B cell (primary cell): ENCODE measurements at regions of chr20 and their contacts with region 1.

Region 1: GRCh38 chr20:58870239-58871014 is 17.9 kb downstream of the GNAS start:
- DNase-seq: peak; percentile 69
- ATAC-seq: peak; percentile 78
- H3K4me3 ChIP-seq: no peak overlapping the region
- H3K4me3 Mint-ChIP-seq: no peak overlapping the region
- H3K27ac ChIP-seq: no peak overlapping the region
- H3K27ac Mint-ChIP-seq: no peak overlapping the region
- H3K4me1 ChIP-seq: peaks cover 5 to 9% of the 10 kb centered on the region in 2 donors
- H3K4me1 Mint-ChIP-seq: peaks cover 12% of the 10 kb centered on the region
- H3K27me3 ChIP-seq: peaks cover 0 to 4% (median 1%) of the 10 kb centered on the region in 4 experiments
- H3K27me3 Mint-ChIP-seq: peaks cover 8% of the 10 kb centered on the region
- CTCF ChIP-seq: peak; percentile 78

Region 2: GRCh38 chr20:58911970-58912369 is 41.5 kb after region 1 on chr20:
- CTCF ChIA-PET with region 1: no interaction called
- POLR2A ChIA-PET with region 1: no interaction called
- intact Hi-C with region 1: no loop called
- DNase-seq: no peak
- ATAC-seq: no peak
- H3K4me3 ChIP-seq: no peak overlapping the region
- H3K4me3 Mint-ChIP-seq: no peak overlapping the region
- H3K27ac ChIP-seq: no peak overlapping the region
- H3K27ac Mint-ChIP-seq: no peak overlapping the region
- H3K4me1 ChIP-seq: peaks cover 19 to 27% of the 10 kb centered on the region in 2 donors
- H3K4me1 Mint-ChIP-seq: peaks cover 38% of the 10 kb centered on the region
- H3K27me3 ChIP-seq: no peaks in the 10 kb centered on the region
- H3K27me3 Mint-ChIP-seq: no peaks in the 10 kb centered on the region
- CTCF ChIP-seq: no peak

Region 3: DNA sequence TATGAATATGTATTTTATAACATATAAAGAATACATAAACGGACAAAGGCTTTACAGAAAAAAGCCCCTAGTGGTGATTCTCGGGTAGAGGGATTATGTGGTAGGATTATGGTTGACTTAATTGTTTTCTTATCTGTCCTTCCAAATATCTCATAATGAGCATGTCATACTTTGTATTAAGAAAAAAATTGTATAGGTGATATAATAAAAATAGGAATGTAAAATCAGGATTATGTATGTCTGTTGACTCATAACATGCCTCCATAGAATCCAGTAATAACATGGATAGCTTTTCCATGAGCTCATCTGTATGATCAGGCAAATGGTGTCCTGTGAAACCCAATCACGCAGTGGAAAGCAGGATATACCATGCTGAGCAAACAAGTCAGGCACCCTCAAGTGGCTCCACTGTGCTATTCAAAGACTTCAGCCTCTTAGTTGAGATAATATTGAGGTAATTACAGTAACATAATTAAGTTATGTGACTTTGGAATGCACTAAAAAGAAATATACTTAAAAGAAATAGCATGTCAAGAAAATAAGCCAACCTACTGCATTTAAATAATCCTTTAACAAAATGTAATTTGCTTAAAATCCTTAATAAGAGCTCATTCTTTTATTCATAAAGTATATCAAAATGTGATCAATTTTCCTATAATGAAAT is 211.8 kb after region 1 on chr20:
- CTCF ChIA-PET with region 1: interaction called, 18 read pairs
- POLR2A ChIA-PET with region 1: no interaction called
- intact Hi-C with region 1: loop called (anchors 1 kb)
- DNase-seq: peak; percentile 35
- ATAC-seq: no peak
- H3K4me3 ChIP-seq: no peak overlapping the region
- H3K4me3 Mint-ChIP-seq: no peak overlapping the region
- H3K27ac ChIP-seq: no peak overlapping the region
- H3K27ac Mint-ChIP-seq: no peak overlapping the region
- H3K4me1 ChIP-seq: peaks cover 3 to 7% of the 10 kb centered on the region in 2 donors
- H3K4me1 Mint-ChIP-seq: peaks cover 7% of the 10 kb centered on the region
- H3K27me3 ChIP-seq: peaks cover 0 to 16% (median 0%) of the 10 kb centered on the region in 4 experiments
- H3K27me3 Mint-ChIP-seq: peaks cover 29% of the 10 kb centered on the region
- CTCF ChIP-seq: peak; percentile 69

Region 4: DNA sequence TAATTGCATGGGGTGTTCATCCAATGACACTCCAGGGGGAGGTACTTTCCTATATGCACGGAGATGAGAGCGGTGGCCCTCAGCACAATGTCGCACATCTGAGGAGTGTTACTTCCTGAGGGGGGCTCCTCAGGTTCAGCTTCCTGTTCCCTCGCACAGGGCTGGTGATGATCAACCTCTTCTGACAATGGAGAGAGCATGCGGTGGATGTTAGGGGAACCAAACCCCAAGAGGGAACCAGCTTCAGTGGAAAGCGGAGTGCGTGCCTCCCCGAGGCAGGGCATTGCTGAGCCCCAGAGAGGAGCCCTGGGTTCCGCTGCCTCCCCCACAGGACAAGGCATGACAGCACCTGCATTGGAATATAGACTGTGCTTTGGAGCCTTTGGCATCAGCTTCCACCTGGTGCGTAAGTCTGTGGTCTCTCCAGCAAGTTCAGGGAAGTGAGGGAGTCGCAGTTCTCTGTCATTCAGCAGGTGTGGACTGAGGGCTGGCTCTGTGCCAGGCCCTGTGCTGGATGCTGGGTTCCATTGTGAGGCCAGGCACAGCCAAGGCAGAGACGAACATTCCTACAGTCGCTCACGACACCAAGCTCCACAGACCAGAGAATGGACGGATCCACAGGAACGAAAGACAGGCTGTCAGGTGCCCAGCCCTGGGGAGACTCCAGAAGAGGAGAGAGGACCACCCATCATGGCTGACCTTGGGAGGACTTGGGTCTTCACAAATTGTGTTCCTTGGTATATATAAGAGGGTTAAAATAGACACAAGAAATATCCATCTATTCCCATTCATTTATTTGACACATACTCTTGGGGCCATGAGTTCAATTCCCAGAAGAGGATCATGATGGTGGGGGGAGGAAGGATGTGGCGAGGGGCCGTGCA is 289.3 kb after region 1 on chr20:
- CTCF ChIA-PET with region 1: no interaction called
- POLR2A ChIA-PET with region 1: no interaction called
- intact Hi-C with region 1: loop called (anchors 1 kb)
- DNase-seq: peak; percentile 57
- ATAC-seq: peak; percentile 34
- H3K4me3 ChIP-seq: peak overlapping the region in 2 of 5 experiments; percentile 19 to 30
- H3K4me3 Mint-ChIP-seq: peak overlapping the region; percentile 66
- H3K27ac ChIP-seq: no peak overlapping the region
- H3K27ac Mint-ChIP-seq: peak overlapping the region; percentile 59
- H3K4me1 ChIP-seq: peaks cover 51 to 53% of the 10 kb centered on the region in 2 donors
- H3K4me1 Mint-ChIP-seq: peaks cover 58% of the 10 kb centered on the region
- H3K27me3 ChIP-seq: no peaks in the 10 kb centered on the region
- H3K27me3 Mint-ChIP-seq: peaks cover 3% of the 10 kb centered on the region
- CTCF ChIP-seq: no peak

Region 5: DNA sequence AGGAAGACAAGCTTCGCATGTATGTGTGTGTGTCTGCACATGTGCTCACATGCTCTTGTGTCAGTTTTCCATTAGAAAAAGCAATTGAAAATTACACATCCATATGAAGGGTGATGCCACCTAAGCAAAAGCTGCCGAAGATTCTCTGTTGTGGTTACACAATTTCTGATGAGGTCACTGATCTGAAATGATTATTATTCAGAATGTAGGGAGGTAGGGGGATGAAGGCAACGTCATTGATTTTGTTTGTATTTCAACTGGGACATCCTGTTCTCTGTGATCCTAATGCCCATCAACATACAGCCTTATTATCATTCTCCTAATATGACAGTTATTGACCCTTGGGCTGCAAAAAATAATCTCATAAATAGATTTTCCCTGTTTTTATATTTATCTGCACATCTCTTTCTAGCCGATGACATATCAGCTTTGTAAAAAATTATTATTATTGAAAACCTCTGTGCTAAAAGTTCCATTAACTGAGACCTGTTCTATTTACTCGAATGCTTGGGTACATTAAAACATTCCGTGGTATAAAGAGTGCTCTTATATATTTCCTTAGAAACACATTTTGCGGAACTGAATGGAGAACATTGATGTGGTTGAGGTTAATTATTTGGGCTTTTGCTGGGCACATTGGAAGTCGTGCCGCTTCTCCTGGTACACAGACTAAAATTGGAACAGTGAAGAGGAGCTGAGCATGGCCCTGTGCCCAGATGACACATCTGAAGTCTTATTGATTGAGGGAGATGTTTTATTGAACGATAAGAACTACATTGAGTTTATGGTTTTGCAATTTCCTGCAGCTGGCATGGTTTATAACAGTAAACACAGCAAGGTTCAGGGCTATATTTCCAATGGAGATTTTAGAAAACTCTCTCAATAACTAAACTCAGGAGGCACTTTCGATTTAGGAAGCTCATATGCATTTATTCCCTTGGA is 344.4 kb after region 1 on chr20:
- CTCF ChIA-PET with region 1: interaction called, 10 read pairs
- POLR2A ChIA-PET with region 1: no interaction called
- intact Hi-C with region 1: no loop called
- DNase-seq: no peak
- ATAC-seq: no peak
- H3K4me3 ChIP-seq: no peak overlapping the region
- H3K4me3 Mint-ChIP-seq: no peak overlapping the region
- H3K27ac ChIP-seq: no peak overlapping the region
- H3K27ac Mint-ChIP-seq: no peak overlapping the region
- H3K4me1 ChIP-seq: no peaks in the 10 kb centered on the region
- H3K4me1 Mint-ChIP-seq: no peaks in the 10 kb centered on the region
- H3K27me3 ChIP-seq: no peaks in the 10 kb centered on the region
- H3K27me3 Mint-ChIP-seq: no peaks in the 10 kb centered on the region
- CTCF ChIP-seq: no peak

Region 6: DNA sequence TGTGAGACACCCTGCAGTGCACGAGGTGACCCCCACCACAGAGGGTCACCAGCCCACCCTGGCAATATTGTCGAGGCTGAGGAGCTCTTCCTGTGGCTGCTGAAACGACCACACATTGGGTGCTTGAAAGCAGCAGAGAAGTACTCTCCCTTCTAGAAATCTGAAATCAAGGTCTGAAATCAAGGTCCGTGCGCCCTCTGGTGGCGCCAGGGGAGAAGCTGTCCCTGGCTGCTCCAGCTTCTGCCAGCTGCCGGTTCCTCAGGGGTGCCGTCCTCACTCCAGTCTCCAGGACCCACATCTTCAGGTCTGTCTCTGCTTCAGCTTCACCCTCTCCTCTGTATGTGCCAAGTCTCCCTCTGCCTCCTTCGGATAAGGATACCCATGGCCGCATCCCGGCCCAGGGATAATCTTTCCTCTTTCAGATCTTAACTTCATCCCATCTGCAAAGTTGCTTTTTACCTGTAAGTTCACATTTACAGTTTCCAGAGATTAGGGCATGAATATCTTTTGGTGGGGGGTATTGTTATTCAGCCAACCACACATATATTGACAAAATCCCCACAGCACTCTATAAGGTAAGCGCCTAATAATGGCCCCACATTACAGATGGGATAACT is 625.6 kb after region 1 on chr20:
- CTCF ChIA-PET with region 1: interaction called, 58 read pairs
- POLR2A ChIA-PET with region 1: no interaction called
- intact Hi-C with region 1: no loop called
- DNase-seq: peak; percentile 70
- ATAC-seq: peak; percentile 65
- H3K4me3 ChIP-seq: no peak overlapping the region
- H3K4me3 Mint-ChIP-seq: no peak overlapping the region
- H3K27ac ChIP-seq: no peak overlapping the region
- H3K27ac Mint-ChIP-seq: no peak overlapping the region
- H3K4me1 ChIP-seq: no peaks in the 10 kb centered on the region
- H3K4me1 Mint-ChIP-seq: no peaks in the 10 kb centered on the region
- H3K27me3 ChIP-seq: peaks cover 0 to 11% (median 0%) of the 10 kb centered on the region in 4 experiments
- H3K27me3 Mint-ChIP-seq: peaks cover 23% of the 10 kb centered on the region
- CTCF ChIP-seq: peak; percentile 96